ENCODE measurements at regions of chr2 and their contacts with region 1.

Region 1: GRCh38 chr2:235746257-235747084 is 252.6 kb downstream of the AGAP1 start:
- DNase-seq: peak in 22 of 35 experiments; percentile 3 to 73 (median 24)
- ATAC-seq: peak in 1 of 4 experiments; percentile 69
- H3K4me3 ChIP-seq: no peak overlapping the region
- H3K4me3 Mint-ChIP-seq: no peak overlapping the region
- H3K27ac ChIP-seq: no peak overlapping the region
- H3K27ac Mint-ChIP-seq: no peak overlapping the region
- H3K4me1 ChIP-seq: no peaks in the 10 kb centered on the region
- H3K4me1 Mint-ChIP-seq: no peaks in the 10 kb centered on the region
- H3K27me3 ChIP-seq: peaks cover 0 to 12% of the 10 kb centered on the region in 2 experiments
- H3K27me3 Mint-ChIP-seq: peaks cover 12 to 28% of the 10 kb centered on the region in 2 donors

Region 2: GRCh38 chr2:235595422-235596010 is 151.0 kb before region 1 on chr2:
- CTCF ChIA-PET with region 1: interaction called, 6 to 23 read pairs
- POLR2A ChIA-PET with region 1: no interaction called
- DNase-seq: peak in 18 of 35 experiments; percentile 5 to 51 (median 20)
- ATAC-seq: no peak
- H3K4me3 ChIP-seq: no peak overlapping the region
- H3K4me3 Mint-ChIP-seq: no peak overlapping the region
- H3K27ac ChIP-seq: no peak overlapping the region
- H3K27ac Mint-ChIP-seq: no peak overlapping the region
- H3K4me1 ChIP-seq: no peaks in the 10 kb centered on the region
- H3K4me1 Mint-ChIP-seq: no peaks in the 10 kb centered on the region
- H3K27me3 ChIP-seq: peaks cover 0 to 13% of the 10 kb centered on the region in 2 experiments
- H3K27me3 Mint-ChIP-seq: peaks cover 6 to 13% of the 10 kb centered on the region in 2 donors

Region 3: GRCh38 chr2:235685024-235685721 is 61.3 kb before region 1 on chr2:
- CTCF ChIA-PET with region 1: interaction called in 1 of 2 experiments, 10 read pairs
- POLR2A ChIA-PET with region 1: no interaction called
- DNase-seq: peak in 6 of 35 experiments; percentile 5 to 22 (median 10)
- ATAC-seq: peak in 2 of 4 experiments; percentile 48 to 51
- H3K4me3 ChIP-seq: no peak overlapping the region
- H3K4me3 Mint-ChIP-seq: peak overlapping the region in 1 of 3 donors; percentile 9
- H3K27ac ChIP-seq: peak overlapping the region; percentile 52
- H3K27ac Mint-ChIP-seq: peak overlapping the region in 1 of 2 donors; percentile 69
- H3K4me1 ChIP-seq: peaks cover 0 to 23% of the 10 kb centered on the region in 2 experiments
- H3K4me1 Mint-ChIP-seq: peaks cover 0 to 20% (median 5%) of the 10 kb centered on the region in 3 donors
- H3K27me3 ChIP-seq: peaks cover 0 to 9% of the 10 kb centered on the region in 2 experiments
- H3K27me3 Mint-ChIP-seq: peaks cover under 1 to 21% of the 10 kb centered on the region in 2 donors

Region 4: GRCh38 chr2:235734688-235735231 is 11.7 kb before region 1 on chr2:
- CTCF ChIA-PET with region 1: no interaction called
- POLR2A ChIA-PET with region 1: interaction called in 1 of 2 experiments, 11 read pairs
- DNase-seq: no peak
- ATAC-seq: no peak
- H3K4me3 ChIP-seq: no peak overlapping the region
- H3K4me3 Mint-ChIP-seq: no peak overlapping the region
- H3K27ac ChIP-seq: no peak overlapping the region
- H3K27ac Mint-ChIP-seq: peak overlapping the region in 1 of 2 donors; percentile 25
- H3K4me1 ChIP-seq: no peaks in the 10 kb centered on the region
- H3K4me1 Mint-ChIP-seq: no peaks in the 10 kb centered on the region
- H3K27me3 ChIP-seq: peaks cover 0 to 7% of the 10 kb centered on the region in 2 experiments
- H3K27me3 Mint-ChIP-seq: peaks cover 8 to 19% of the 10 kb centered on the region in 2 donors

Region 5: GRCh38 chr2:235836491-235836926 is 90.0 kb after region 1 on chr2:
- CTCF ChIA-PET with region 1: no interaction called
- POLR2A ChIA-PET with region 1: no interaction called
- DNase-seq: no peak
- ATAC-seq: no peak
- H3K4me3 ChIP-seq: no peak overlapping the region
- H3K4me3 Mint-ChIP-seq: no peak overlapping the region
- H3K27ac ChIP-seq: no peak overlapping the region
- H3K27ac Mint-ChIP-seq: no peak overlapping the region
- H3K4me1 ChIP-seq: no peaks in the 10 kb centered on the region
- H3K4me1 Mint-ChIP-seq: no peaks in the 10 kb centered on the region
- H3K27me3 ChIP-seq: peaks cover 0 to 2% of the 10 kb centered on the region in 2 experiments
- H3K27me3 Mint-ChIP-seq: peaks cover 3 to 11% of the 10 kb centered on the region in 2 donors

Measured in T-cell (primary cell).